Head of caudate nucleus (tissue), 42 donors: ENCODE measurements at regions of chr22 and their contacts with region 1.

Region 1: DNA sequence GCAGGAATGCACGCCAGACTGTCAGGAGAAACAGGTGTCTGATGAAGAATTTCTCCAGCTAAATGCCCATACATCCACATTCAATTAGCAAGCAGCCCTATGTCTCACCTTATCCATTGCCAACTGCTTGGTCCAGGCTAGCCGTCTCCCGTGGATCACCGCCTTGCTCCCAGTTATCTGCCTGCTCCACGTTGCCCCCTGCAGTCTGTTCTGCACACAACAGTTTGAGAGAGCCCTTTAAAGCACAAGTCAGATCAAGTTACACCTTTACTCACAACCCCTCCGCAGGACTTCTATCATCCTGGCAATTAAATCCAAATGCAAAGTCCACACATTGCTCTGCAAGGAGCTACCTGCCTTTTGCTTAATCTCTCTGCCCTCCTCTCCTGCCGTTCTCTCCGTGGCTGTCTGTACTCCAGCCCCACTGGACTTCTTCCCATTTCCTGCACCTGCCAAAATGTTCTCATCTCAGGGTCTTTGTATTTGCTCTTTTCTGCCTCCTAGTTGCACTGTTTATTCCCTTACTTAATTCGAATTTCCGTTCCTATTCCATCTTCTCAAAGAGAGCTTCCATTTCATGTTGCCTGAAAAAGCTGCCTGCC is 185.3 kb upstream of the LARGE1 start:
- DNase-seq: peak; percentile 20 to 89 (median 68)

Region 2: GRCh38 chr22:33920927-33921524 is 184.5 kb before region 1 on chr22:
- intact Hi-C with region 1: loop called (anchors 10 kb)
- DNase-seq: peak; percentile 97 to 100 (median 99)

Region 3: DNA sequence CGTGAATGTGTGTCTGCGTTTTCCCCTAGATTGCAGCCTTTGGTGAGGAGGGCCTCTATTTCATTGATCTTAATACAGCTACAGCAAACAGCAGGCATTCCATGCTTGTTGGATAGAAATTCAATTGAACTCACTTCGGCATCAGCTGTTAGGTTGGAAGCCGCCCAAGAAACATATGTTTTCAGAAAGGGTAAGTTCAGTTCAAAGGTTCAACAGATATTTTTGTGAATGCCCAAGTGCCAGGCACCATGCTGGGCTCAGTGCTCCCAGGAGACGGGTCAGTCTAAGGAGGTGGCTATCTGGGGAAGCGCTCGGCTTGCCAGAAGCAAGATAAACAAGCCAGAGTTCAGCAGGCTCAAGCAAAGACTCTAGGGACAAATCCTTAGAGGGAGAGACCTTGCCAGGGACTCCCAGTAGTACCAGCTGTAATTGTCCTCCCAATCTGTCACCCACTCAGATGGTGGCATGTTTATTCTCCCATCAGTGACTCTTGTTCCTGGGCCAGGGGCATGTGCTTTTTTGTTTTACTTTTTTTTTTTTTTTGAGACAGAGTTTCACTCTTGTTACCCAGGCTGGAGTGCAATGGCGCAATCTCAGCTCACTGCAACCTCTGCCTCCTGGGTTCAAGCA is 120.8 kb before region 1 on chr22:
- intact Hi-C with region 1: no loop called
- DNase-seq: no peak